Caco-2 (cell line): ENCODE measurements at regions of chr7 and their contacts with region 1.

Region 1: DNA sequence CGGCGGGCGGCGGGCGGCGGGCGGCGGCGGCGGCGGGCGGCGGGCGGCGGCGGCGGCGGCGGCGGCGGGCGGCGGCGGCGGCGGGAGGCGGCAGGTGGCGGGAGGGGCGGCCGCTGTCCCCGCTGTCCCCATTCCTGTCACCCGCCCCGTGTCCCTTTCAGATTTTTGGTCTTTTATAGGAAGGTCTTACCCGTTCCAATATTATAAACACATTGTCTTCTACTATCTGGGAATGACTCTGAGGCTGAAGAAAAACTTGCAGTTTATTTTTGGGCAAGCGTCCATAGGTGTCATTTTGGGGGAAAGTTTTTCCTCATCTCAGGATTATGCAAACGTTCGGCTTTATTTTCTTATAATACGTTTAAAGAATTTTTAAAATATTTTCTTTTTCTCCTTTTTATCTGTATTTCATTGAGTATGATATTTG is 578 bp downstream of the ZNF713 start:
- DNase-seq: peak in 1 of 2 experiments; percentile 7
- H3K4me3 ChIP-seq: peak overlapping the region; percentile 66
- H3K4me3 Mint-ChIP-seq: peak overlapping the region; percentile 97
- H3K27ac Mint-ChIP-seq: peak overlapping the region; percentile 99
- H3K4me1 ChIP-seq: no peaks in the 10 kb centered on the region
- H3K4me1 Mint-ChIP-seq: no peaks in the 10 kb centered on the region
- H3K27me3 ChIP-seq: no peaks in the 10 kb centered on the region
- H3K27me3 Mint-ChIP-seq: peaks cover 4% of the 10 kb centered on the region
- CTCF ChIP-seq: no peak

Region 2: GRCh38 chr7:55912748-55913158 is 24.9 kb after region 1 on chr7:
- CTCF ChIA-PET with region 1: no interaction called
- POLR2A ChIA-PET with region 1: no interaction called
- intact Hi-C with region 1: no loop called
- DNase-seq: no peak
- H3K4me3 ChIP-seq: no peak overlapping the region
- H3K4me3 Mint-ChIP-seq: no peak overlapping the region
- H3K27ac Mint-ChIP-seq: peak overlapping the region; percentile 70
- H3K4me1 ChIP-seq: peaks cover 24% of the 10 kb centered on the region
- H3K4me1 Mint-ChIP-seq: peaks cover 26% of the 10 kb centered on the region
- H3K27me3 ChIP-seq: no peaks in the 10 kb centered on the region
- H3K27me3 Mint-ChIP-seq: no peaks in the 10 kb centered on the region
- CTCF ChIP-seq: no peak

Region 3: GRCh38 chr7:55951637-55952351 is 64.0 kb after region 1 on chr7 and contains the start of gene MRPS17:
- CTCF ChIA-PET with region 1: no interaction called
- POLR2A ChIA-PET with region 1: no interaction called
- intact Hi-C with region 1: loop called (anchors 1 kb)
- DNase-seq: peak; percentile 96 to 97
- H3K4me3 ChIP-seq: peak within 1 kb of the TSS; percentile 84
- H3K4me3 Mint-ChIP-seq: peak within 1 kb of the TSS; percentile 97
- H3K27ac Mint-ChIP-seq: peak within 1 kb of the TSS; percentile 99
- H3K4me1 ChIP-seq: no peaks in the 10 kb centered on the region
- H3K4me1 Mint-ChIP-seq: no peaks in the 10 kb centered on the region
- H3K27me3 ChIP-seq: no peaks in the 10 kb centered on the region
- H3K27me3 Mint-ChIP-seq: no peaks in the 10 kb centered on the region
- CTCF ChIP-seq: no peak
- total RNA-seq, gene MRPS17: 18.9 and 22.7 TPM in 2 replicates